ENCODE measurements at regions of chr3 and their contacts with region 1.

Region 1: DNA sequence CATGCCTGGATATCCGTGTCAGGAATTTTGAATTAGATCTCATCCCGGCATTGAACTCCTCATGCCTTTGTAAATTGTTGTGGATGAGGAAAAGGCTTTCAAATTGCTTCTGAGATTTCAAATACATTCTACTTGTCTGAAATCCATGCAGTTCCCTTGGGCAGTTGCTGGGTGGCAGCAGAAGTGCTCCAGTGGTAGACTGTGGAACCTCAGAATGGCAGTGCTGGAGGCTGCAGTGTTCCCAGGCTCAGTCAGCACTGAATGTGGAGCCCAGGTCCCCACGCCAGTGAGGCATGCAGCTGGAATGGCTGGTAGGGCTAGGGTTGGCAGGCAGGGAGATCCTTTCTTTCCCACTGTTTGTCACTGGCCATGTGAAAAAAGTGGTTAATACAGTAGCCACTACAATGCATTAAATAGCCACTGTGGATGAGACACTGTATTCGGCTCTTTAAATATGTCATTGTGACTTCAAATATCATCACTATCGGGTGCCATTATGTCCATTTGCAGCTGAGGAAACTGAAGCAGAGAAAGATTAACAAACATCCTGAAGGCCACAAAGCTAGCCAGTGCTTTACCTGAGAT is 98.6 kb downstream of the TPRG1 start:
- DNase-seq: peak; percentile 73
- ATAC-seq: peak; percentile 90
- H3K4me3 ChIP-seq: no peak overlapping the region
- H3K27ac ChIP-seq: no peak overlapping the region
- H3K4me1 ChIP-seq: peaks cover 0 to 9% of the 10 kb centered on the region in 2 experiments; a peak in 3 of 4 replicates
- H3K27me3 ChIP-seq: no peaks in the 10 kb centered on the region; the same call in 1 of the 2 replicates
- CTCF ChIP-seq: peak; percentile 82 to 84 (median 83)
- POLR2A ChIP-seq: no peak
- RAD21 ChIP-seq: peak; percentile 96

Region 2: GRCh38 chr3:189222927-189223636 is 47.3 kb before region 1 on chr3:
- CTCF ChIA-PET with region 1: no interaction called
- POLR2A ChIA-PET with region 1: no interaction called
- RAD21 ChIA-PET with region 1: no interaction called
- intact Hi-C with region 1: no loop called
- DNase-seq: no peak
- ATAC-seq: no peak
- H3K4me3 ChIP-seq: no peak overlapping the region
- H3K27ac ChIP-seq: no peak overlapping the region
- H3K4me1 ChIP-seq: no peaks in the 10 kb centered on the region
- H3K27me3 ChIP-seq: no peaks in the 10 kb centered on the region
- CTCF ChIP-seq: no peak
- POLR2A ChIP-seq: no peak
- RAD21 ChIP-seq: no peak

Region 3: GRCh38 chr3:189233225-189233858 is 37.0 kb before region 1 on chr3:
- CTCF ChIA-PET with region 1: interaction called, 34 read pairs
- POLR2A ChIA-PET with region 1: interaction called, 8 read pairs
- RAD21 ChIA-PET with region 1: no interaction called
- intact Hi-C with region 1: loop called (anchors 1 kb)
- DNase-seq: peak; percentile 70
- ATAC-seq: peak; percentile 95
- H3K4me3 ChIP-seq: no peak overlapping the region
- H3K27ac ChIP-seq: no peak overlapping the region
- H3K4me1 ChIP-seq: no peaks in the 10 kb centered on the region
- H3K27me3 ChIP-seq: no peaks in the 10 kb centered on the region
- CTCF ChIP-seq: peak; percentile 90 to 96 (median 90)
- POLR2A ChIP-seq: no peak
- RAD21 ChIP-seq: peak; percentile 95

Region 4: GRCh38 chr3:189394599-189395121 is 124.3 kb after region 1 on chr3:
- CTCF ChIA-PET with region 1: no interaction called
- POLR2A ChIA-PET with region 1: no interaction called
- RAD21 ChIA-PET with region 1: no interaction called
- intact Hi-C with region 1: no loop called
- DNase-seq: no peak
- ATAC-seq: no peak
- H3K4me3 ChIP-seq: no peak overlapping the region
- H3K27ac ChIP-seq: no peak overlapping the region
- H3K4me1 ChIP-seq: peaks cover 8 to 17% of the 10 kb centered on the region in 2 experiments
- H3K27me3 ChIP-seq: no peaks in the 10 kb centered on the region
- CTCF ChIP-seq: no peak
- POLR2A ChIP-seq: no peak
- RAD21 ChIP-seq: no peak

Region 5: DNA sequence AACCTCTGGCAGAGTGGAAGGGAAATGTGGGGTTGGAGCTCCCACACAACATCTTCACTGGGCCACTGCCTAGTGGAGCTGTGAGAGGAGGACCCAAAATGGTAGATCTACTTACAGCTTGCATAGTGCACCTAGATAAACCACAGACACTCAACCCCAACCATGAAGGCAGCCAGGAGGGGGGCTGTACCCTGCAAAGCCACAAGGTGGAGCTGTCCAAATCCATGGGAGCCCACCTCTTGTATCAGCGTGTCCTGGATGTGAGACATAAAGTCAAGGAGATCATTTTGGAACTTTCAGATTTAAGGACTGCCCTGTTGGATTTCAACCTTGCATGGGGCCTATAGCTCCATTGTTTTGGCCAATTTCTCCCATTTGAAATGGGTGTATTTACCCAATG is 381.7 kb after region 1 on chr3:
- CTCF ChIA-PET with region 1: interaction called, 3 read pairs
- POLR2A ChIA-PET with region 1: no interaction called
- RAD21 ChIA-PET with region 1: no interaction called
- intact Hi-C with region 1: loop called (anchors 5 kb)
- DNase-seq: peak; percentile 21
- ATAC-seq: peak; percentile 88
- H3K4me3 ChIP-seq: no peak overlapping the region
- H3K27ac ChIP-seq: no peak overlapping the region
- H3K4me1 ChIP-seq: no peaks in the 10 kb centered on the region
- H3K27me3 ChIP-seq: no peaks in the 10 kb centered on the region
- CTCF ChIP-seq: peak; percentile 46 to 81 (median 74); a peak in 5 of 6 replicates
- POLR2A ChIP-seq: no peak
- RAD21 ChIP-seq: peak; percentile 58

Region 6: GRCh38 chr3:189883113-189883753 is 612.9 kb after region 1 on chr3:
- CTCF ChIA-PET with region 1: no interaction called
- POLR2A ChIA-PET with region 1: no interaction called
- RAD21 ChIA-PET with region 1: no interaction called
- intact Hi-C with region 1: no loop called
- DNase-seq: no peak
- ATAC-seq: no peak
- H3K4me3 ChIP-seq: no peak overlapping the region
- H3K27ac ChIP-seq: no peak overlapping the region
- H3K4me1 ChIP-seq: no peaks in the 10 kb centered on the region
- H3K27me3 ChIP-seq: no peaks in the 10 kb centered on the region
- CTCF ChIP-seq: no peak
- POLR2A ChIP-seq: no peak
- RAD21 ChIP-seq: no peak

Region 7: DNA sequence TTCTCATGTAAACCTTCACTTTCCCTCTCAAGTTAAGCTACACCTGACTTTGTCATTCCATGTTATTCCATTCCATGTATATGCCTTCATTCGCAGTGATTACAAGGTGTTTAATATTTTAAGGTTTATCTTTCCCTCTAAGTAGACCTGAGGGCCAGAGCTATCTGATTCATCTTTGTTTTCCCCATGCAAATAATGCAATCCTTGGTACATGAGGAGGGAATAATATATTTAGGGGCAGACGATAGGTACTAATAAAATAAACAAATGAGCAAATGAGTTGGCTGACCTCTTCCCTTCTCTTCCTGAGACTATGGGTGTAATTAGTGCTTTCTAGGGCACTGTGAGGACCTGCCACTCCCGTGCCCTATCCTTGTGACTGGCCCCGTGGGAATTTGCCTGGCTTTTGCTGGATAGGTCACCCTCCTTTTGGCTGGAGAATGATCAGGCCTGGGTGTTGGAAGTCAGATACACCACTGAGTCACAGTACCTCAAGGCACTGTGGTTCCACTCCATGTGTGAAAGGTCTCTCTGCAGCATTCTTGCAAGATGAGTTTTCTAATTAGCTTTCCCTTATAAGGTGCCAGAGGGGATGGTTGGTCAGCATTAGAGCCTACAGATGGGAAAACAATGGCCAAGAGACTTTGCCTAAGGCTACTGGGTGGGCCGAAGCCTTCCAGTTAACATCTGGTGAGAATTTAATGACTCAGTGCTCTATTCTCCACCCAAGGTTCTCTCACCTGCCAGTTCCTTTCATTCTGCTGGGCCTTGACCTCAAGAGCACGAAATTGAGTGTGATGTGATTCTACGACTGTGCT is 667.2 kb after region 1 on chr3:
- CTCF ChIA-PET with region 1: interaction called, 13 read pairs
- POLR2A ChIA-PET with region 1: no interaction called
- RAD21 ChIA-PET with region 1: no interaction called
- intact Hi-C with region 1: no loop called
- DNase-seq: peak; percentile 99
- ATAC-seq: peak; percentile 93
- H3K4me3 ChIP-seq: peak overlapping the region in 1 of 2 experiments; percentile 13; a peak in 1 of 4 replicates
- H3K27ac ChIP-seq: peak overlapping the region; percentile 17; the same call in 1 of the 2 replicates
- H3K4me1 ChIP-seq: peaks cover 24 to 44% of the 10 kb centered on the region in 2 experiments
- H3K27me3 ChIP-seq: no peaks in the 10 kb centered on the region; the same call in 1 of the 2 replicates
- CTCF ChIP-seq: no peak
- POLR2A ChIP-seq: no peak
- RAD21 ChIP-seq: peak; percentile 40

Region 8: DNA sequence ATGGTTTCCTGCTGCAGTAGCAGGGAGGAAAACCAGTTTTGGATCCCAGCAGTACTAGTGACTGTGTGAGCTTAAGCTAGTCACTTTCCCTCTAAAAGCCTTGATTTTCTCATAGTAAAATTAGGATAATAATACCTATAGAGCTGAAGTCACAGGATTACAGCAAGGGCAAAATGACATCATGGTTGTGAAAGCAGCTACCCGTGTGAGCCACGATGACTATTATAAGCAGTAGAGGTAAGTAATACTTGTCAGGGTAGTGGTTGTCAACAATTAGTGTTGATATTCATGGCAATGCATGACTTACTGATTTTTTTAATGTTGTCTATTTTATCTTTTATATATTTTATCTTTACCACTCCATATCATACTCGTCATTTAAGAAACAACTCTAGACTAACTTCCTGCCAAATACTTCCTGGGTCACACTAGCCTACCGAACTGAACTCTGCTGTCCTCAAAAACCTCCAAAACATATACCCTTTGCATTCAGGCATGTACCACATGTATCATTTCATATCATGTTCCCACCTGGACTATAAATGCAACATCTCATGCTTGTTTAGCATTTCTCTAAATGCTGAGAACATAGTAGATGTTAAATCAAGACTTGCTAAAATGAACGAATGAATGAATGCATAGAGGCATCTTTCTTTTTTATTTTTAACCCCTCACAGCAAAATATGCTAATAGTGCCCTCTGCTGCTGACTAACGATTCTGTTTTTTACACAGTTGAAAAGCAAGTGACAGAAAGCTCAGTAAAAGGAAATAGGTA is 677.8 kb after region 1 on chr3:
- CTCF ChIA-PET with region 1: interaction called, 92 read pairs
- POLR2A ChIA-PET with region 1: interaction called, 3 read pairs
- RAD21 ChIA-PET with region 1: interaction called in 1 of 2 experiments, 14 read pairs
- intact Hi-C with region 1: loop called (anchors 1 kb)
- DNase-seq: no peak
- ATAC-seq: peak; percentile 58
- H3K4me3 ChIP-seq: no peak overlapping the region
- H3K27ac ChIP-seq: no peak overlapping the region
- H3K4me1 ChIP-seq: peaks cover 2 to 13% of the 10 kb centered on the region in 2 experiments; a peak in 2 of 4 replicates
- H3K27me3 ChIP-seq: no peaks in the 10 kb centered on the region
- CTCF ChIP-seq: peak; percentile 54 to 87 (median 79)
- POLR2A ChIP-seq: no peak
- RAD21 ChIP-seq: peak; percentile 96